Right ventricle myocardium superior (tissue), 1 donor: ENCODE measurements at regions of chr5 and their contacts with region 1.

Region 1: GRCh38 chr5:142769741-142770631 is at the start of gene ARHGAP26:
- DNase-seq: peak; percentile 99
- ATAC-seq: peak; percentile 96
- total RNA-seq, gene ARHGAP26: 32.5 TPM

Region 2: DNA sequence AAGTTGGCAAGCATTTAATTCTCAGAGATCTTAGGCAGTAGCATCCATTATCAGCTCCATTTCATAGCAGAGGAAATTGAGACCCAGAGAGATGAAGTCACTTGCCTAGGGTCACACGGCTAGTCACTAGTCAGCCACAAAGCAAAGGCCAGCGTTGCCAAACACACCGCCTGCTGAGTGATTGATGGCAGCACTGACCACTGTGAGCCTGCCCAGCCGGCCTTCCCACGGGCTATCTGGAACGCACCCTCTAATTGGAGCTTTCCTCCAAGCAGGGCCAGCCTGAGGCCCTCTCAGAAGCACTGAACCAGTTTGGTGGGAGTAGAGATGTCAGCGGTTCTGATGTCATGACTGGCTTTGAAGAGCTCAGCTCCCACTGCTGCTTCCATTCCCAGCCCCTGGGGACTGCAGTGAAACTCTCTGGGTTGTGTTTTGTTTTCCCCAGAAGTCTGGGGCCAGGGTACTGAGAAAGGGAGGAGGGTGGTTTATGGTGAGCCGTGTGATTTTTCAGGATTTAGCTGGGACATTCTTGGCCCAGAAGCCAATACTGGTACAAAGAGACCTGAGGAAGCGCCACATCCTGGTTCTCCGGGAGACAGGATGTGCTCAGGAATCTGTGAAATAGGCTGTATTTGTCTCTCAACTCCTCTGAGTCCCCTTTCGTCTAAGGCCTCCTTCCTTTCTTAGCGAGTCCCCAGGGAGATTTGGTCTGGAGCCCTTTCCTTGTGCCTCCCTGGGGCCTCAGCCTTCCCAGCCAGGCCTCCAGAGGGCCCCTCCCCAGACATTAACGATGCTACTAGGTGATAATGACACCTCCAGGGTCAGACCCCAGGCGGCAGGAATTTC is 489.7 kb before region 1 on chr5:
- intact Hi-C with region 1: no loop called
- DNase-seq: peak; percentile 83
- ATAC-seq: peak; percentile 74

Region 3: DNA sequence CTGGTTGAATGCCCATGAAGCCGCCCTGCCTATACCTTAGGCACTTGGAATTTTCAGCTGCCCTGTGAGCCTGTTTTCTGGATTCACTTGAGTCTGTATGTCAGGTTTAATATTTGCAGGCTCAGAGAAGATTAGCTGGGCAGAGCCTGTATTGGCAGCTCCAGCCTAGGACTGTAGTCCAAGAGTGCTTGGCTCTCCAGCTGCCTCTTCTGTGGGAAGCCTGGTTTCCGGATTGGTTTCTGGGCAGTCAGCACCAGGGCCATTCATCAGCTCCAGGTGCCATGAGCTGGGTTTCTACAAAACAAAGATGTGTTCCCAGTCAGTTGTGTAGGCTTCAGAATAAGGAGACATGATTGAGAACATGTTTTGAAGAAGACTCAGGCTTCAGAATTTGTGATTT is 90.3 kb after region 1 on chr5:
- intact Hi-C with region 1: no loop called
- DNase-seq: no peak
- ATAC-seq: peak; percentile 64

Region 4: DNA sequence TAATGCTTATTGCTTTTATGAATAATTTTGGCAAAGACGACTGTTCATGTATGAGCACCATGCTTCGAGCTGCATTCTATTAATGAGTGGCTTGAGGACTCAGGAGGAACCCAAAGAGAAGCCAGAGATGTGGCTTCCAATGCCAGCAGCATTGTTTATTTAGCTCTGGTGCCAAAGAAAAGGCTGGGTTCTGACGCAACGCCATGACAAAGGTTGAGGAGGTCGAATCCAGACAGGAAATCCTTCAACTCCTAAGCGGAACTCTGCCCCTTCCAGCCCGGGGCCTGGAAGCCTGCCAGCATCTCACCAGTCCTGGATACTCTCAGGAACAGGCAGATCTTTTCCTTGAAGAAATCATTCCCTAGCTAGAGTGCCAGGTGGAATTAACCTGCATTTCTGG is 104.6 kb after region 1 on chr5:
- intact Hi-C with region 1: loop called (anchors 5 kb)
- DNase-seq: peak; percentile 85
- ATAC-seq: peak; percentile 20